ENCODE measurements at regions of chr15 and their contacts with region 1.

Region 1: GRCh38 chr15:100349696-100350433 is 8.1 kb upstream of the ADAMTS17 start:
- DNase-seq: peak; percentile 95
- H3K4me3 ChIP-seq: peak overlapping the region; percentile 73 to 81
- H3K27ac ChIP-seq: peak overlapping the region; percentile 84 to 90
- H3K4me1 ChIP-seq: peaks cover 5% of the 10 kb centered on the region
- H3K27me3 ChIP-seq: no peaks in the 10 kb centered on the region
- CTCF ChIP-seq: peak; percentile 85 to 97 (median 91)
- POLR2A ChIP-seq: no peak

Region 2: DNA sequence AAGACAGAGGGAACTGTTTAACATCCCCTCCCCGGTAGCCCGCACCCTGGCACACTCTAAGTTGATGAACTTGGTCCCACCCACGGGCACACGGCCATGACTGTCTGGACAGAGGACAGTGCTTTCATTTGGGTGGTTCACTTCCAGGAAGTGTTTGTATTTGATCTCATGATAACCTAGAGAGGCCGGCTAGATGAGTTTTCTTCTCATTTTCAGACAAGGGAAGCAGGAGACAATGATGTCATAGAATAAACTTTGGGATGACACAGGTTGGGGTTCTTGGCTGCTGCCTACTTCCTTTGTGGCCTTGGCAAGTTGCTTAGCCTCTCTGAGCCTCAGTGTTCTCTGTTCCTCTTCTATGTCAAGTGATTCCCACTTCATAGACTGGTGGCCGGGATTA is 600.5 kb before region 1 on chr15:
- intact Hi-C with region 1: no loop called
- DNase-seq: no peak
- H3K4me3 ChIP-seq: no peak overlapping the region
- H3K27ac ChIP-seq: no peak overlapping the region
- H3K4me1 ChIP-seq: no peaks in the 10 kb centered on the region
- H3K27me3 ChIP-seq: no peaks in the 10 kb centered on the region
- CTCF ChIP-seq: no peak
- POLR2A ChIP-seq: no peak

Region 3: GRCh38 chr15:100572362-100572983 is 222.6 kb after region 1 on chr15:
- intact Hi-C with region 1: loop called (anchors 10 kb)
- DNase-seq: no peak
- H3K4me3 ChIP-seq: no peak overlapping the region
- H3K27ac ChIP-seq: no peak overlapping the region
- H3K4me1 ChIP-seq: no peaks in the 10 kb centered on the region
- H3K27me3 ChIP-seq: no peaks in the 10 kb centered on the region
- CTCF ChIP-seq: peak; percentile 15 to 60 (median 26)
- POLR2A ChIP-seq: no peak